Endothelial cell of umbilical vein (primary cell): ENCODE measurements at regions of chr12 and their contacts with region 1.

Region 1: GRCh38 chr12:116773276-116773731 is 35.2 kb downstream of the RNFT2 start:
- DNase-seq: peak; percentile 87
- H3K4me3 ChIP-seq: no peak overlapping the region
- H3K27ac ChIP-seq: peak overlapping the region; percentile 24
- H3K4me1 ChIP-seq: peaks cover 18% of the 10 kb centered on the region
- H3K27me3 ChIP-seq: no peaks in the 10 kb centered on the region
- CTCF ChIP-seq: peak; percentile 15 to 32
- POLR2A ChIP-seq: no peak

Region 2: DNA sequence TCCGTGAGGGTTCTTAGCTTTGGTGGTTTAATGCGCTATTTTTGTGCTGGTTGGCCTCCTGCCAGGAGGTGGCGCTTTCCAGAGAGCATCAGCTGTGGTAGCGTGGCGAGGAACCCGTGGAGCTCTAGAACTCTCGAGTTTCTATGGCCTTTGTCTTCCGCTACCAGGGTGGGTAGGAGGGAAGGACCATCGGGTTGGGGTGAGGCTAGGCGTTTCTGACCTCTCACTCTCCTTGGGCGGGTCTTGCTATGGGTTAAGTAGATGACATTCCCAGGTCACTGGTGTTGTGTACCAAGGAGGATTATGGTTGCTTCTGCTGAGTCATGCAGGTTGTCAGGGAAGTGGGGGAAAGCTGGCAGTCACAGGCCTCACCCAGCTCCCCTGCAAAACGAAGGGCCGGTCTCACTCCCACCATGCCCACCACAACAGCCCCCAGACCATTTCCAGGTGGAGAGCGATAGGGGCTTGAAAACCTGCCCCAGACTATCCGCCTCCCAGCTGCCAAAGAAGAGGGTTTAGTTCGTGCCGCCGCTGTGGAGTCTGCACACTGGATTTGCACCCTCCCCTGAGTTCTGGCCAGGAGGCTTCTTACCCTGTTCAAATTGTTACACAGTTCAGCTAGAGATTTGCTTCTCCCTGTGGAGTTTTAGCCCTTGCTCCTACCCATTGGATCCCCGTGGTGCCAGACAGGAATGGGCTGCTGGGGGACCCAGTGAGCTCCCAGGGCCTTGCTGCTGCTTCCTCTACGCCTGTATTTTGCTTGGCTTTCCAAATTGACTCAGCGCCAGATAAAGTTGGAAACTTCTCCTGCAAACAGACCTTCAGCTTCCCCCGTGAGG is 13.3 kb before region 1 on chr12:
- CTCF ChIA-PET with region 1: interaction called, 10 read pairs
- POLR2A ChIA-PET with region 1: no interaction called
- dilution Hi-C with region 1: no loop called
- intact Hi-C with region 1: no loop called
- DNase-seq: peak; percentile 50
- H3K4me3 ChIP-seq: no peak overlapping the region
- H3K27ac ChIP-seq: no peak overlapping the region
- H3K4me1 ChIP-seq: no peaks in the 10 kb centered on the region
- H3K27me3 ChIP-seq: no peaks in the 10 kb centered on the region
- CTCF ChIP-seq: no peak
- POLR2A ChIP-seq: no peak

Region 3: GRCh38 chr12:116818948-116819832 is 45.9 kb after region 1 on chr12:
- CTCF ChIA-PET with region 1: no interaction called
- POLR2A ChIA-PET with region 1: no interaction called
- dilution Hi-C with region 1: no loop called
- intact Hi-C with region 1: loop called (anchors 1 kb)
- DNase-seq: peak; percentile 89
- H3K4me3 ChIP-seq: peak overlapping the region; percentile 62 to 84 (median 76)
- H3K27ac ChIP-seq: peak overlapping the region; percentile 86
- H3K4me1 ChIP-seq: peaks cover 13% of the 10 kb centered on the region
- H3K27me3 ChIP-seq: peaks cover 0 to 1% of the 10 kb centered on the region in 2 experiments
- CTCF ChIP-seq: no peak
- POLR2A ChIP-seq: peak; percentile 68

Region 4: DNA sequence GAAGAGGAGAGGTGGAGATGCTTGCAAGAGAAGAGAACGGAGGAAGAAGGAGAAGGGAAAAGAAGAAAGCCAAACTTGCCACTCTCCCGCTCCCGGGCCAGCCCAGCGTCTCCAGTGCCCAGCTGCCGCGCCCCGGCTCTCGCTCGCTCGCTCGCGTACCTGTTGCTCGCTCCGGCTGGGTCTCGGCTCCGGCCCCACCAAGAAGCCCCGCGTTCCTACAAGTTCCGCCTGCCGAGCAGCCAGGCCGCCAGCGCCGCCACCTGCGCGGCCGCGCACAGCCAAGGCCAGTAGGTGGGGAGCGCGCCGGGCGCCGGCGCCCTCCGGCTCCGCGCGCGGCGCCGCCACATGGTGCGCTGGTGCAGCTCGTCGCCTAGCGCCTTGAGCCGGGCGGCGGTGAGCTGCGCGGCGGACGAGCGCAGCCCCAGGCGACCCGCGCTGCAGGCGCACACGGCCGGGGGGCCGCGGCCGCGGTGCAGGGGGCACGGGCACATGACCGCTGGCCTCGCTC is 107.6 kb after region 1 on chr12:
- CTCF ChIA-PET with region 1: no interaction called
- POLR2A ChIA-PET with region 1: no interaction called
- dilution Hi-C with region 1: no loop called
- intact Hi-C with region 1: loop called (anchors 5 kb)
- DNase-seq: peak; percentile 13
- H3K4me3 ChIP-seq: no peak overlapping the region
- H3K27ac ChIP-seq: no peak overlapping the region
- H3K4me1 ChIP-seq: no peaks in the 10 kb centered on the region
- H3K27me3 ChIP-seq: peaks cover 57 to 72% of the 10 kb centered on the region in 2 experiments
- CTCF ChIP-seq: no peak
- POLR2A ChIP-seq: no peak